ENCODE measurements at regions of chr9 and their contacts with region 1.

Region 1: DNA sequence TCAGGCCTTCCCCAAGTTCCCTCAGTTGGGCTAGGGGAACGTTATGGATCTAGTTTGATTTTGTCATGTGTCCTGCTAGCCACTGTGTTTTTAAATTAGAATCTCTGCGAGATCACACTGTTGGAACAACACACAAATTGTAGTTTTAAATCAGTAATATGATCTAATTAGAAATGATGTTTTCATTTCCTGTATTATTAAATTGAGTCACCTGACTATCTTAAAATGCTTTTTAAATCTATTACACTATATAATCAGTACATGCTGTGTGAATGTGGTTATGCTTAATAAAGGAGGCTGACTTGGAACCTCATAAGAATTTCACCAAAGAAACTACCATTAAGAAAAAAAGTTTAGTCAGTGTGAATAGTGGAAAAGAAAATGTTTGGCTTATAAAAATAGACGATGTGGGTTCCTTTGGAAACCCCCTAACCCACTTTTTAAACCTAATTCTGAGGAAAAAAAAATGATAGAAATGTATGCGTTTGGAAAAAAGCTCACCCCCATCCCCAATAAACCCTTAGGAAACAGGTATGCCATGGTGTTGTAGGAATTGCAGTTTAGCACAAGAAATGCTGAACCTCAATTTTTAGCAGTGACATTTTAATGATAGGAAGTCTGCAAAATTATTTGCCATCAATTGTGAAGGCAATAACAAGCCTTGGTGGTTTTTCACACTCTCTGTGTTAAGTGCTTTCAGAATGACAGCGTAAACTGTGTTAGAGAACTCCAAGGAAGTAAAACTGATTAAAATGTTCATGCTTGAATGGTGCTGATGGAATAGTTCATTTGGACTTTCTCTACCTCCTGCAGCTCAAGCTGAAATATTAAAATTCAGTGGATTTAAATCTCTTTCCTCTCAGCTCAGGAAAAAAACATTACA is 59.0 kb downstream of the TLE4 start:
- DNase-seq: no peak
- H3K4me3 Mint-ChIP-seq: peak overlapping the region; percentile 42
- H3K27ac Mint-ChIP-seq: peak overlapping the region; percentile 72
- H3K4me1 Mint-ChIP-seq: peaks cover 63% of the 10 kb centered on the region
- H3K27me3 Mint-ChIP-seq: no peaks in the 10 kb centered on the region

Region 2: GRCh38 chr9:79592726-79593493 is 37.9 kb before region 1 on chr9:
- intact Hi-C with region 1: loop called (anchors 1 kb)
- DNase-seq: peak; percentile 14
- H3K4me3 Mint-ChIP-seq: no peak overlapping the region
- H3K27ac Mint-ChIP-seq: peak overlapping the region; percentile 19
- H3K4me1 Mint-ChIP-seq: peaks cover 49% of the 10 kb centered on the region
- H3K27me3 Mint-ChIP-seq: peaks cover 16% of the 10 kb centered on the region

Region 3: GRCh38 chr9:79667749-79668454 is 37.1 kb after region 1 on chr9:
- intact Hi-C with region 1: loop called (anchors 5 kb)
- DNase-seq: no peak
- H3K4me3 Mint-ChIP-seq: no peak overlapping the region
- H3K27ac Mint-ChIP-seq: no peak overlapping the region
- H3K4me1 Mint-ChIP-seq: no peaks in the 10 kb centered on the region
- H3K27me3 Mint-ChIP-seq: no peaks in the 10 kb centered on the region

Region 4: GRCh38 chr9:79686381-79687130 is 55.8 kb after region 1 on chr9:
- intact Hi-C with region 1: loop called (anchors 2 kb)
- DNase-seq: no peak
- H3K4me3 Mint-ChIP-seq: no peak overlapping the region
- H3K27ac Mint-ChIP-seq: peak overlapping the region; percentile 68
- H3K4me1 Mint-ChIP-seq: peaks cover 19% of the 10 kb centered on the region
- H3K27me3 Mint-ChIP-seq: no peaks in the 10 kb centered on the region